ENCODE measurements at regions of chr1 and their contacts with region 1.

Region 1: DNA sequence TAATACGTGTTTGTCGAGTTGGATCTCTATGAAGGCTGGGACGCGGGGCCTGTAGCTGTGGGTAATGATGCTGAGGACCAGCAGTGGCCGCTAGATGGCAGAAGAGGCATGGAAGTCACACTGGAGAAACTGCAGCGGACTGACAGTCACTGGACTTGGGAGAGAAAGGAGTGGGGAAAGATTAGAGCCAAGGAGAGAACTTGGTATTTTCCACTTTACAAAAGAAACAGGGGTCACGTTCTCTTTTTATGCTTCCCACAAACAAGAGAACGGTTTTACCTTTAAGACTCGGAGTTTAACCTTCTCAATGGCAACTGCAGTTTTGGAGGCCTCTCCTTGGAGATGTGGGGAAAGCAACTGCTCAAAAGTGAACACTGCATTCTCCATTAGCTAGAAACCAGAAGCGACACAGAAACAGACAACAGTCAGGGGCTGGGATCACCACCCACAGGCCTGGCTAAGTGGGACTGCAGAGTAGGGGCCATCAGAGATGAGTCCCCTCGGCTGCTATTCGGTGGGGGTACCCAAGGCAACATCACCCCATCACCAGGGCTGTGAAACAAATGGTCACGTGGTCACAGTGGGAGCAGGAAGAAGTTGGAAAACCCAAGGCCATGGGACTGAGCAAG is 51.1 kb upstream of the EDEM3 start:
- DNase-seq: peak; percentile 75 to 90 (median 87)
- H3K4me3 ChIP-seq: no peak overlapping the region
- H3K27ac ChIP-seq: no peak overlapping the region
- H3K4me1 ChIP-seq: no peaks in the 10 kb centered on the region
- H3K27me3 ChIP-seq: no peaks in the 10 kb centered on the region
- CTCF ChIP-seq: peak; percentile 70 to 85 (median 81)
- EP300 ChIP-seq: no peak
- POLR2A ChIP-seq: no peak

Region 2: DNA sequence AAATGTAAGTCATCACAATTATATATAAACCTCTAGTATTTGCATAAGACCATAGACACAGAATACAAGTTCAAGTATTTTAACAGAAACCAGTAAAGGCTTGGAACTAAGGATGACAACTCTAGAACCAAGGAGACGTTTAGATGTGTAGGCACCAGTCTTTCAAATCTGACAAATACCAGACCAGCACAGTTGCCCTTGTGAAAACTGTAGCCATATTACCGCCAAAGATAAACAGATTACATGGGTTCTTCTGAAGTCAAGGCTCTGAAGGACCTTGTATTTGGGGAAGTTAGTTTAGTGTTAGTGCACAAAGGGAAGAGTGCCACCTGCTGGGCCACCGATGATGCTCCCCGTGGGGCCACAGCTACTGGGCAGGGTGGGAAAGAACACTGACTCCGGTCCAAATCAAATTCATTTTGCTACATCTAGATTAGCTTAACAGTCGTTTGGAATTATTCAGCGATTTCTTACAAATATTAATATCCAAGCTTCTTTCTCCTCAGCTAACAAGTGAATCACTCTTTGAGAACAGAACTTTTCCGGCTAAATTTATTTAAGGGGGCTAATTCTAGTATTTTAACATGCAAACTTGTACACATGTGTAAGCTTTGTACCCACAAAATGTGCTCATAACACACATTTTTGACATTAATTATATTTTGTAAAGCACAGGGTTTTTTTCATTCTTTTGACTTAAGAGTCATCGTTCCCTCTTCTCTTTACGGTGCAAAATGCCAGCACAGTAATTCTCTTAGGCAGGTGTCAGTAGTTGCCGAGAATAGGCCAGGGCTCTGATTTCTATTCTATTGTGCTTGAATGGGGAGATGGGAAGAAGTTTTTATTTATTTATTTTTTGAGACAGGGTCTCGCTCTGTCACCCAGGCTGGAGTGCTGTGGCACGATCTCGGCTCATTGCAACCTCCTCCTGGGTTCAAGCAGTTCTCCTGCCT is 176.5 kb after region 1 on chr1:
- intact Hi-C with region 1: loop called in 2 of 4 experiments (anchors 5 to 10 kb)
- DNase-seq: peak in 4 of 5 donors; percentile 22 to 65 (median 42)
- H3K4me3 ChIP-seq: no peak overlapping the region
- H3K27ac ChIP-seq: no peak overlapping the region
- H3K4me1 ChIP-seq: no peaks in the 10 kb centered on the region
- H3K27me3 ChIP-seq: no peaks in the 10 kb centered on the region
- CTCF ChIP-seq: peak in 1 of 3 donors; percentile 43
- EP300 ChIP-seq: no peak
- POLR2A ChIP-seq: no peak

Region 3: DNA sequence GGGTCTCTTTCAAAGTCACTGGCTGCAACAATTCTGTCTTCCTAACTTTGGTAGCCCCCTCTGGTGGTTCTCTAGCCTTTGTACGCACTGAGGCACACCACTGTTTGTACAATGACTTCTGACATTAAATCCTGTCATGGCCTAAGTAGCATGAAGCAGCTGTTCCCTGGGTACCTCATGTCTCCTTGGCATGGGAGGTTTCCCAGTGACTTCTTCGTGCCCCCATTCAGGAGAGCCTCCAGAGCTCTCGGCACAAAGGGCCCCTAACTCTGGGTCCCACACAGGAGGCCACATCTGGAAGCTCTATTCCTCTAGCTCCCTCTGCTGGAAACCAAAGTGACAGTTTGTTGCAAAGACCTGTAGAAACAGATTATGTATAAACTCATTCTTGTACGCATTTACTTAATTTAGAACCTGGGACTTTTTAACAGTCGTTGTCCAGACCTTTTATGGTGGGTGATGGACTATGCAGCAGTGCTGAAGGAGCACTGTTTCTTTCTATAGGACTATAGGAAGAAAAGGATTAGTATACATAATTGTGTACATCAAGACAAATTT is 364.6 kb after region 1 on chr1:
- intact Hi-C with region 1: loop called in 2 of 4 experiments (anchors 5 to 10 kb)
- DNase-seq: peak in 1 of 5 donors; percentile 20
- H3K4me3 ChIP-seq: no peak overlapping the region
- H3K27ac ChIP-seq: no peak overlapping the region
- H3K4me1 ChIP-seq: no peaks in the 10 kb centered on the region
- H3K27me3 ChIP-seq: no peaks in the 10 kb centered on the region
- CTCF ChIP-seq: peak in 1 of 3 donors; percentile 11
- EP300 ChIP-seq: no peak
- POLR2A ChIP-seq: no peak

Measured in ovary (tissue), 10 donors.